ENCODE measurements at regions of chr12 and their contacts with region 1.

Region 1: GRCh38 chr12:52139552-52140062 is 52.2 kb downstream of the KRT80 start:
- DNase-seq: peak; percentile 57 to 78
- H3K4me3 ChIP-seq: no peak overlapping the region
- H3K4me3 Mint-ChIP-seq: no peak overlapping the region
- H3K27ac Mint-ChIP-seq: no peak overlapping the region
- H3K4me1 ChIP-seq: peaks cover 14% of the 10 kb centered on the region
- H3K4me1 Mint-ChIP-seq: peaks cover 14% of the 10 kb centered on the region
- H3K27me3 ChIP-seq: no peaks in the 10 kb centered on the region
- H3K27me3 Mint-ChIP-seq: no peaks in the 10 kb centered on the region
- CTCF ChIP-seq: peak; percentile 88 to 92

Region 2: GRCh38 chr12:52327052-52327829 is 187.6 kb after region 1 on chr12:
- CTCF ChIA-PET with region 1: interaction called, 3 read pairs
- POLR2A ChIA-PET with region 1: no interaction called
- intact Hi-C with region 1: loop called (anchors 1 kb)
- DNase-seq: peak; percentile 80 to 81
- H3K4me3 ChIP-seq: no peak overlapping the region
- H3K4me3 Mint-ChIP-seq: no peak overlapping the region
- H3K27ac Mint-ChIP-seq: no peak overlapping the region
- H3K4me1 ChIP-seq: no peaks in the 10 kb centered on the region
- H3K4me1 Mint-ChIP-seq: no peaks in the 10 kb centered on the region
- H3K27me3 ChIP-seq: no peaks in the 10 kb centered on the region; the same call in none of the 2 replicates
- H3K27me3 Mint-ChIP-seq: peaks cover 2% of the 10 kb centered on the region
- CTCF ChIP-seq: peak; percentile 66 to 92

Region 3: DNA sequence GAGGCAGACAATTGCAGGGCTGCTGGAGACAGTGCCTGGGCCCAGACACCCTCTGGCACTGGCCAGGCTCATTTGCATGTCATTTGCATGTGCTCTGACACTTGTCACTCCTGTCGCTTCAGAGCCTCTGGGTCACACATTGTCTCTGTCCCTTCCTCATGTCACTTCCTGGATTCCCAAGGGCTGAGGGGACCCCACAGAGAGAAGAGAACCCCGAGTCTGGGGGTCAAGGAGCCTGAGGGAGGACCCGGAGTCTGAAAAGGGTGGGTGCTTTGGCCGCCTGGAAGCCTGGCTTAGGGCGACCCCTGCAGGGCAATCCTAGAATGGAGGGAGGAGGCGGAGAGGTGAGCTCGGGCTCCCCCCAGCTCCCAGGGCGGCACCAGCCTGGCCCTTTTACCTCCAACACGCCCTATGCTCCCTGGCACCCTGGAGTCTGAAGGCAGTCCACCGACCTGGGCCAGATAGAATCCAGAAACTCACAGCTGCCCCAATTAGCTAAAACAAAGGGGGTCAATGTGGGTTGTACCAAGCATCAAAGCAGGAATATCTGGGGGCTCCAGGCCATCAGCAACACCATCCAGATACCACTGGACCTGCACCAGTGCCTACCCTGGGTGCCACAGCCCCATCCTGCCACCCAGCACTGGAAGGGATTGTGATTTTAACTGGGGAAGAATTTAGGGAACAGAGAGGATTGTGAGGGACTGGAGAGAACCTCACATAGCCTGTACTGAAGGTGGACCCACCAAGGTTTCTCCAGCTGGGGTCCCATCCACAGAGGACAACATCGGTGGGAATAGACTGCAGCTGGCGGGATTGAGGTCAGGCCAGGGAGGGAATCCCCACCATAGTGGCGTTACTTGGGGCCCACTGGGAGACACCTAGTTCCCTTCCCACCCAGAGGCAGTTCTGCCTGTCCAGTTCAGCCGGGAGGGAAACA is 731.0 kb after region 1 on chr12:
- CTCF ChIA-PET with region 1: interaction called, 5 read pairs
- POLR2A ChIA-PET with region 1: no interaction called
- intact Hi-C with region 1: loop called (anchors 5 kb)
- DNase-seq: peak in 1 of 2 experiments; percentile 69
- H3K4me3 ChIP-seq: no peak overlapping the region
- H3K4me3 Mint-ChIP-seq: no peak overlapping the region
- H3K27ac Mint-ChIP-seq: peak overlapping the region; percentile 53
- H3K4me1 ChIP-seq: peaks cover 38% of the 10 kb centered on the region
- H3K4me1 Mint-ChIP-seq: peaks cover 32% of the 10 kb centered on the region
- H3K27me3 ChIP-seq: no peaks in the 10 kb centered on the region
- H3K27me3 Mint-ChIP-seq: no peaks in the 10 kb centered on the region
- CTCF ChIP-seq: peak; percentile 46 to 70